GM12878 (cell line): ENCODE measurements at regions of chr10 and their contacts with region 1.

Region 1: DNA sequence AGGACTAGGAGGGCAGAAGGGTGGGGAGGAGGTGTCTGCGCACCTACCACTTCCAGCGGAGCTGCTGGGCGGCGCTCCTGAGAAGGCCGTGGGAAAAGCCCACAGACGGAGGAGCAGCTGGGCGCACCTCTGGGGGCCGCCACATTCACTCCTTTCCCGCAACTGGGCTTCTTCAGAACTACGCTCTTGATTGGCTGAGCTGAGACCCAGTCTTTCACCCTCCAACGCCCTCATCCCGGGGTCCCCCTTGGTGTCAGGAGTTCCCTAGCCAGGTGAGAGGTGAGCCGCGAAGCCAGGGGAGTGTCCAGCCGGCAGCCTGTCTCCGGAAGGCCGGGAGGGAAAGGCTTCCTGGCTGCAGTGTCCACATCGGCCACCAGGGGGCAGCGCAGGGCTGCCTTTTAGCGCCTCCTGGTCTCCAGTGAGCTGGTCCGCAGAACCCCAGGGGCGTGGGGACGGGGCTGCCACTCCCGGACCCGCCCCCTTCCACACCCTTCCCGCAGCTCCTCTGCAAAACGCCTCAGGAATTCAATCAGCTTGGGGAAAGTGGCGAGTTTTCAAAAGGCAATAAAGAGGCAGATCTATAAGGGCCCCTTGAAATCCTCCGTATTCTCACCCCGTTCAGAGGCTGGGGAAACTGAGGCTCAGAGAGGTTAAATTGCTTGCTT is 98.8 kb downstream of the CHST15 start:
- DNase-seq: no peak
- ATAC-seq: peak; percentile 91
- H3K4me3 ChIP-seq: peak overlapping the region; percentile 35; the same call in 1 of the 2 replicates
- H3K27ac ChIP-seq: no peak overlapping the region
- H3K4me1 ChIP-seq: peaks cover 3% of the 10 kb centered on the region; the same call in 1 of the 2 replicates
- H3K27me3 ChIP-seq: peaks cover 3 to 7% of the 10 kb centered on the region in 2 experiments; a peak in 3 of 4 replicates
- CTCF ChIP-seq: peak; percentile 94 to 97 (median 94)
- EP300 ChIP-seq: no peak
- POLR2A ChIP-seq: no peak
- RAD21 ChIP-seq: peak; percentile 86

Region 2: GRCh38 chr10:123548770-123549169 is 445.8 kb before region 1 on chr10:
- CTCF ChIA-PET with region 1: no interaction called
- POLR2A ChIA-PET with region 1: no interaction called
- RAD21 ChIA-PET with region 1: no interaction called
- SMC1A ChIA-PET with region 1: no interaction called
- in situ Hi-C with region 1: no loop called
- intact Hi-C with region 1: no loop called
- DNase-seq: no peak
- ATAC-seq: no peak
- H3K4me3 ChIP-seq: no peak overlapping the region
- H3K27ac ChIP-seq: no peak overlapping the region
- H3K4me1 ChIP-seq: peaks cover 38% of the 10 kb centered on the region
- H3K27me3 ChIP-seq: no peaks in the 10 kb centered on the region
- CTCF ChIP-seq: no peak
- EP300 ChIP-seq: no peak
- POLR2A ChIP-seq: no peak
- RAD21 ChIP-seq: no peak

Region 3: DNA sequence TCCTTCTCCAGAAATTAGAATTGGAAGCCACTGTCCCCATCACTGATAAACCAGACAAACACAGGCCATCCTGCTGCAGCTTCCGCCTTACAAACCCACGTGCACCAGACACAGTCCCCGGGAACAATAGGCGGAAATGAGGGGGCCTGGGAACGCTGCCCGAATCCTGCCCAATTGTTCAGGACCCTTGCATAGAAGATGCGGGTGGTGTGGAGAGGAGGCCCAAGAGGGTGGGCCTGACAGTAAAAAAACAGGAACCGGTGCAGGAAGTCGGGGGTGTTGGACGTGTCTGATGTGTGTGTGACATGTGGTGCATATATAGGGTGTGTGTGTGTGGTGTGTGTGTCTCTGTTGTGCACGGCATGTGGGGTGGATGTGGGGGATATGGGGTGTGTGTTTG is 125.4 kb after region 1 on chr10:
- CTCF ChIA-PET with region 1: no interaction called
- POLR2A ChIA-PET with region 1: no interaction called
- RAD21 ChIA-PET with region 1: no interaction called
- SMC1A ChIA-PET with region 1: no interaction called
- in situ Hi-C with region 1: no loop called
- intact Hi-C with region 1: no loop called
- DNase-seq: no peak
- ATAC-seq: no peak
- H3K4me3 ChIP-seq: no peak overlapping the region
- H3K27ac ChIP-seq: no peak overlapping the region
- H3K4me1 ChIP-seq: peaks cover 13% of the 10 kb centered on the region
- H3K27me3 ChIP-seq: peaks cover 0 to 3% of the 10 kb centered on the region in 2 experiments; a peak in 2 of 4 replicates
- CTCF ChIP-seq: no peak
- EP300 ChIP-seq: no peak
- POLR2A ChIP-seq: no peak
- RAD21 ChIP-seq: no peak

Region 4: GRCh38 chr10:124221356-124222317 is 227.1 kb after region 1 on chr10:
- CTCF ChIA-PET with region 1: interaction called, 5 read pairs
- POLR2A ChIA-PET with region 1: no interaction called
- RAD21 ChIA-PET with region 1: no interaction called
- SMC1A ChIA-PET with region 1: interaction called, 4 read pairs
- in situ Hi-C with region 1: no loop called
- intact Hi-C with region 1: loop called (anchors 10 kb)
- DNase-seq: peak; percentile 83
- ATAC-seq: peak; percentile 90
- H3K4me3 ChIP-seq: peak overlapping the region; percentile 43; the same call in 1 of the 2 replicates
- H3K27ac ChIP-seq: peak overlapping the region; percentile 81
- H3K4me1 ChIP-seq: peaks cover 31% of the 10 kb centered on the region
- H3K27me3 ChIP-seq: no peaks in the 10 kb centered on the region
- CTCF ChIP-seq: no peak
- EP300 ChIP-seq: peak; percentile 88 to 90; a peak in 3 of 4 replicates
- POLR2A ChIP-seq: 0 out of 2 replicates have a peak, but pooled peaks have one; percentile 25
- RAD21 ChIP-seq: no peak

Region 5: GRCh38 chr10:124364633-124365032 is 370.1 kb after region 1 on chr10:
- CTCF ChIA-PET with region 1: interaction called, 10 read pairs
- POLR2A ChIA-PET with region 1: no interaction called
- RAD21 ChIA-PET with region 1: no interaction called
- SMC1A ChIA-PET with region 1: no interaction called
- in situ Hi-C with region 1: no loop called
- intact Hi-C with region 1: no loop called
- DNase-seq: no peak
- ATAC-seq: no peak
- H3K4me3 ChIP-seq: no peak overlapping the region
- H3K27ac ChIP-seq: no peak overlapping the region
- H3K4me1 ChIP-seq: peaks cover 6% of the 10 kb centered on the region; the same call in 1 of the 2 replicates
- H3K27me3 ChIP-seq: peaks cover 0 to 3% of the 10 kb centered on the region in 2 experiments; a peak in 1 of 4 replicates
- CTCF ChIP-seq: no peak
- EP300 ChIP-seq: no peak
- POLR2A ChIP-seq: no peak
- RAD21 ChIP-seq: no peak

Region 6: GRCh38 chr10:124388823-124389612 is 394.5 kb after region 1 on chr10:
- CTCF ChIA-PET with region 1: interaction called, 133 read pairs
- POLR2A ChIA-PET with region 1: interaction called, 4 read pairs
- RAD21 ChIA-PET with region 1: interaction called, 90 read pairs
- SMC1A ChIA-PET with region 1: interaction called, 57 read pairs
- in situ Hi-C with region 1: loop called (anchors 5 kb)
- intact Hi-C with region 1: loop called (anchors 1 kb)
- DNase-seq: peak; percentile 40
- ATAC-seq: peak; percentile 100
- H3K4me3 ChIP-seq: 0 out of 2 replicates have a peak overlapping the region, but pooled peaks have one; percentile 7
- H3K27ac ChIP-seq: no peak overlapping the region
- H3K4me1 ChIP-seq: no peaks in the 10 kb centered on the region
- H3K27me3 ChIP-seq: peaks cover 0 to 1% of the 10 kb centered on the region in 2 experiments; a peak in 2 of 4 replicates
- CTCF ChIP-seq: peak; percentile 90 to 97 (median 91); a peak in 5 of 6 replicates
- EP300 ChIP-seq: no peak
- POLR2A ChIP-seq: no peak
- RAD21 ChIP-seq: peak; percentile 97

Region 7: DNA sequence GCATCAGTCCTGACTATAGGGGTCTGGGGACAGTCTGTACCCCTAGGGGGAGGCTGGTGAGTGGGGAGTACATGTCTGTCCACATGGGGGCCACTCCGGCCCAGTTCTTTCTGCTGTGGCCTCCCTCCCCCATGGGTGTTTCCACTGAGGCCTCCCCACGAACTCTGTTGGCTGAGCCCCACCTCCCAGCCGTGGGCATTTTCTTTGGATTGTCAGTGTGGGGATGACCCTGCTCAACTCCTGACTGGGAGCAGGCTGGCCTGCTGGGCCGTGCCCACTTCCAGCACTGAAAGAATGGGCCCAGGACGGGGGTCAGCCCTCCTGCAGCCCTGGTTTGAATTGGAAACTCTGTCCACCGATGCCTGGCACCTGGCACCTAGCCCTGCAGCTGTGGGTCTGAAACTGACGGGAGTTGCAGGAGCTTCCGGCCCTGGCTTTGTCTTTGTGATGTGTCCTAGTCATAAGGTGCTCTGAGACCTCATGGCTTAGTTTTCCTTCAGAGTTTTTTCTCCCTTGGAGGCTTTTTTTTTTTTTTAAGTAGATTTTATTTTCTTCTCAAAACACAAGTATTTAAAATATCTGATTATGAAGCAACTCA is 513.6 kb after region 1 on chr10:
- CTCF ChIA-PET with region 1: no interaction called
- POLR2A ChIA-PET with region 1: no interaction called
- RAD21 ChIA-PET with region 1: no interaction called
- SMC1A ChIA-PET with region 1: no interaction called
- in situ Hi-C with region 1: no loop called
- intact Hi-C with region 1: loop called (anchors 10 kb)
- DNase-seq: no peak
- ATAC-seq: peak; percentile 66
- H3K4me3 ChIP-seq: no peak overlapping the region
- H3K27ac ChIP-seq: no peak overlapping the region
- H3K4me1 ChIP-seq: no peaks in the 10 kb centered on the region
- H3K27me3 ChIP-seq: no peaks in the 10 kb centered on the region
- CTCF ChIP-seq: no peak
- EP300 ChIP-seq: no peak
- POLR2A ChIP-seq: no peak
- RAD21 ChIP-seq: no peak